Aorta (tissue), 5 donors: ENCODE measurements at regions of chr14 and their contacts with region 1.

Region 1: GRCh38 chr14:75258615-75259466 is 19.8 kb upstream of the FOS start:
- DNase-seq: peak; percentile 100
- ATAC-seq: peak; percentile 96
- H3K4me3 ChIP-seq: peak overlapping the region; percentile 0 to 15
- H3K27ac ChIP-seq: peak overlapping the region; percentile 73 to 96
- H3K4me1 ChIP-seq: no peaks in the 10 kb centered on the region
- H3K27me3 ChIP-seq: no peaks in the 10 kb centered on the region

Region 2: DNA sequence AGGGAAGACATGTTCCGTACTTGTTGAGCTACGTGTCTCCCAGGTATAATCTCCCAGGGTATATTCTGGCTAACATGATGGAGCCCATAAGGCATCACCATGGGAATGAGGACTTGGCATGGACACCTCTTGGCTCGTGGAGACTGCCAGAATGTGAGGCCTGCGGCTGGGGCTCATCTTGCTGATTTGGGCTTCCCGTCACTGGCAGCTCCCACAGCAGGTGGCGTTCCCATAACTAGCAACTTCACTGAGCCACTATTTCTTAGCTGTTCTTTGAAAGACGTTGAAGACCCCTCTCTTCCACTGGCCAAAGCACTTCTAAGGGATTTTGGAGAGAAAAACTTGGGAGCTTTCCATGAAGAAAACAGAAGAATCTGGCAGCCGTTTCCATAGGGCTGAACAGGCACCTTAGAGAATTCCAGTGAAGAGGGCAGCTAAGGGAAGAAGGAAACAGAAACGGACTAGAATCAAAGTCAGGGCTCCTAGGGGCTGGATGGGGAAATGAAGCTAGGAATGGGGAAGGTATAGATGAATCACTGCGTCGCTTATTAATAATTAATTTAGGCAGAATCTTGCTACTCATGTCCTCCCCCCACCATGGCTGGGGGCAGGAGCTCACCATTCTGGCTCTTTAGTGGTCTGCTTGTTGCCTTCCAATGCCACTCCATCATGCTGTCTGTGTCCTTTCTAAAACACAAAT is 19.9 kb before region 1 on chr14:
- intact Hi-C with region 1: loop called in 1 of 2 experiments (anchors 2 kb)
- DNase-seq: peak in 1 of 2 donors; percentile 79
- ATAC-seq: no peak
- H3K4me3 ChIP-seq: no peak overlapping the region
- H3K27ac ChIP-seq: peak overlapping the region; percentile 91 to 99
- H3K4me1 ChIP-seq: peaks cover 5 to 11% of the 10 kb centered on the region in 2 donors
- H3K27me3 ChIP-seq: no peaks in the 10 kb centered on the region